ENCODE measurements at regions of chr13 and their contacts with region 1.

Region 1: GRCh38 chr13:50156561-50157127 is 141.4 kb downstream of the KCNRG start:
- DNase-seq: no peak
- ATAC-seq: no peak
- H3K4me3 ChIP-seq: no peak overlapping the region
- H3K4me3 Mint-ChIP-seq: no peak overlapping the region
- H3K27ac ChIP-seq: no peak overlapping the region
- H3K27ac Mint-ChIP-seq: no peak overlapping the region
- H3K4me1 ChIP-seq: no peaks in the 10 kb centered on the region
- H3K4me1 Mint-ChIP-seq: peaks cover 19 to 25% (median 19%) of the 10 kb centered on the region in 3 donors
- H3K27me3 ChIP-seq: no peaks in the 10 kb centered on the region
- H3K27me3 Mint-ChIP-seq: peaks cover 0 to 3% of the 10 kb centered on the region in 2 donors

Region 2: GRCh38 chr13:49922301-49922700 is 234.3 kb before region 1 on chr13:
- CTCF ChIA-PET with region 1: no interaction called
- POLR2A ChIA-PET with region 1: no interaction called
- DNase-seq: no peak
- ATAC-seq: no peak
- H3K4me3 ChIP-seq: no peak overlapping the region
- H3K4me3 Mint-ChIP-seq: no peak overlapping the region
- H3K27ac ChIP-seq: no peak overlapping the region
- H3K27ac Mint-ChIP-seq: no peak overlapping the region
- H3K4me1 ChIP-seq: no peaks in the 10 kb centered on the region
- H3K4me1 Mint-ChIP-seq: no peaks in the 10 kb centered on the region
- H3K27me3 ChIP-seq: no peaks in the 10 kb centered on the region
- H3K27me3 Mint-ChIP-seq: no peaks in the 10 kb centered on the region

Region 3: GRCh38 chr13:50026788-50027473 is 129.7 kb before region 1 on chr13:
- CTCF ChIA-PET with region 1: no interaction called
- POLR2A ChIA-PET with region 1: interaction called in 1 of 2 experiments, 11 read pairs
- DNase-seq: no peak
- ATAC-seq: no peak
- H3K4me3 ChIP-seq: no peak overlapping the region
- H3K4me3 Mint-ChIP-seq: no peak overlapping the region
- H3K27ac ChIP-seq: no peak overlapping the region
- H3K27ac Mint-ChIP-seq: no peak overlapping the region
- H3K4me1 ChIP-seq: peaks cover 0 to 2% of the 10 kb centered on the region in 2 experiments
- H3K4me1 Mint-ChIP-seq: peaks cover 0 to 8% (median 0%) of the 10 kb centered on the region in 3 donors
- H3K27me3 ChIP-seq: no peaks in the 10 kb centered on the region
- H3K27me3 Mint-ChIP-seq: no peaks in the 10 kb centered on the region

Region 4: DNA sequence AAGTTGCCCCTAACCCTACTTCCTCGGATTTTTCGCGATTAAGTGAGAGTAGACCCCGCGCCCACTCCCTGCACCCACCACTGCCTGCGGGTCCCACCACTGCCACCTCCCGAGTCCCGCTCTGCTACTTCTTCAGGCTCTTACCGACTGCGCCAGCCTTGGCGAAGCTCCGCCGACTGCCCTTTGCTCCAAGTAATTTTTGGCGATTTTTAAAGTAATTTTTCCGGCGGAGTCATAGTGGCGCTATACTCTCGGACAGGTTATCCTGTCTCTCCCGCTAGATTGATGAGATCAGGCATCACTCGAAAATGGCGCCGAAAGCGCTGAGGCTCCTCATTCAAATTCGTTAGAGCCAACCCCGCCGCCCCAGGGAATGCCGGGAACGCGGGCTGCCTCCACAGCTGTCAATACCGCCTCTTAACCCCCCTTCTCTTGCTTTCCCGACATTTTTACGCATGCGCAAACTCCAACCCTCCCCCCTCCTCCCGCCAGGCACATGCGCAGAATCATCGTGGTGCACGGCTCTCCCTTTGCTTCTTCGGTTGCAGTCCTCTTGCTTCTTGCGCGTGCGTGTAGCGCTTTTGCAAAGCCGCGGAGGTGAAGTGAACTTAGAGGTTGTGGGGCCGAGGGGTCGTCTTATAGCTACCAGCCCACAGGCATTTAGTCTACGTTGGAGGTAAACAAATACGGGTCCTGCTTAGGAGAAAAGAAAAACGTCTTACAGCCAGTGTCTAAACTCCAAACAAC is 74.8 kb before region 1 on chr13:
- CTCF ChIA-PET with region 1: no interaction called
- POLR2A ChIA-PET with region 1: no interaction called
- DNase-seq: peak; percentile 93 to 99 (median 97)
- ATAC-seq: peak; percentile 76 to 79 (median 77)
- H3K4me3 ChIP-seq: peak overlapping the region; percentile 87 to 96
- H3K4me3 Mint-ChIP-seq: peak overlapping the region; percentile 94 to 99 (median 96)
- H3K27ac ChIP-seq: peak overlapping the region; percentile 85
- H3K27ac Mint-ChIP-seq: peak overlapping the region; percentile 95 to 96
- H3K4me1 ChIP-seq: peaks cover 31 to 37% of the 10 kb centered on the region in 2 experiments
- H3K4me1 Mint-ChIP-seq: peaks cover 38 to 66% (median 61%) of the 10 kb centered on the region in 3 donors
- H3K27me3 ChIP-seq: peaks cover 0 to 10% of the 10 kb centered on the region in 2 experiments
- H3K27me3 Mint-ChIP-seq: peaks cover 0 to 9% of the 10 kb centered on the region in 2 donors

Region 5: GRCh38 chr13:50309882-50310594 is 153.4 kb after region 1 on chr13:
- CTCF ChIA-PET with region 1: no interaction called
- POLR2A ChIA-PET with region 1: interaction called in 1 of 2 experiments, 13 read pairs
- DNase-seq: peak in 1 of 35 experiments; percentile 12
- ATAC-seq: peak in 2 of 4 experiments; percentile 37 to 41
- H3K4me3 ChIP-seq: no peak overlapping the region
- H3K4me3 Mint-ChIP-seq: peak overlapping the region in 1 of 3 donors; percentile 21
- H3K27ac ChIP-seq: no peak overlapping the region
- H3K27ac Mint-ChIP-seq: peak overlapping the region; percentile 17 to 31
- H3K4me1 ChIP-seq: peaks cover 11 to 14% of the 10 kb centered on the region in 2 experiments
- H3K4me1 Mint-ChIP-seq: peaks cover 12 to 26% (median 13%) of the 10 kb centered on the region in 3 donors
- H3K27me3 ChIP-seq: no peaks in the 10 kb centered on the region
- H3K27me3 Mint-ChIP-seq: no peaks in the 10 kb centered on the region

Region 6: DNA sequence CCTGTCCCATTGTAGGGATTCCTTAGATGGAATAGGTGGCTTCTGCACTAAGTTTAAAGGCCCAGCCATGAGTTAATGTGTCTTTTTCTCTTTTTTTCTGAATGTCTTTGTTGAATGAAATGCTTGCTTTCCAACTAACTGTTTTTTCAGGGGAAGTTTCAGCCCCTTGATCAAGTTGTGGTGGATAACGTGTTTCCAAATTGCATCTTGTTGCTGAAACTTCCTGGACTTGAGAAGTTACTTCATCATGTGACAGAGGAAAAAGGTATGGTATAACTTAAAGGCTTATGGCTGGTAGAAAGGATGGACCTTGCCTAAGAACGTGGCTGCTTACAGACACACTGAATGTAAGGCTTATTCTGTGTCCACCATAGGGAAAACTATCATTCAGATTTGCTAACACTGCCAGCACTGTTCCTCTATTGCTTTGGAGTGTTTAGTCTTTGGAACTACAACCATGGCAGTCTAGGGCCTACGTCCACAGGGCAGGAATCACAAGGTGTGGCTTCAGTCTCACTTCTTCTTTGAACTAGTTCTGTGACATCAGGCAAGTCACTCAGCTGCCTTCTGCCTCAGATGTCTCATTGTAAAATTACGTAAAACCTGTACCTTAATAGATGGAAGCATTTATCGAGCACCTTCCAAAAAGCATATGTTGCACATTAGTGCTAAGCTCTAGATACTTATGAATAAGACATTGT is 778.2 kb after region 1 on chr13:
- CTCF ChIA-PET with region 1: no interaction called
- POLR2A ChIA-PET with region 1: interaction called in 1 of 2 experiments, 15 read pairs
- DNase-seq: no peak
- ATAC-seq: no peak
- H3K4me3 ChIP-seq: no peak overlapping the region
- H3K4me3 Mint-ChIP-seq: no peak overlapping the region
- H3K27ac ChIP-seq: no peak overlapping the region
- H3K27ac Mint-ChIP-seq: no peak overlapping the region
- H3K4me1 ChIP-seq: no peaks in the 10 kb centered on the region
- H3K4me1 Mint-ChIP-seq: peaks cover 0 to 8% (median 4%) of the 10 kb centered on the region in 3 donors
- H3K27me3 ChIP-seq: no peaks in the 10 kb centered on the region
- H3K27me3 Mint-ChIP-seq: no peaks in the 10 kb centered on the region